ENCODE measurements at regions of chr12 and their contacts with region 1.

Region 1: DNA sequence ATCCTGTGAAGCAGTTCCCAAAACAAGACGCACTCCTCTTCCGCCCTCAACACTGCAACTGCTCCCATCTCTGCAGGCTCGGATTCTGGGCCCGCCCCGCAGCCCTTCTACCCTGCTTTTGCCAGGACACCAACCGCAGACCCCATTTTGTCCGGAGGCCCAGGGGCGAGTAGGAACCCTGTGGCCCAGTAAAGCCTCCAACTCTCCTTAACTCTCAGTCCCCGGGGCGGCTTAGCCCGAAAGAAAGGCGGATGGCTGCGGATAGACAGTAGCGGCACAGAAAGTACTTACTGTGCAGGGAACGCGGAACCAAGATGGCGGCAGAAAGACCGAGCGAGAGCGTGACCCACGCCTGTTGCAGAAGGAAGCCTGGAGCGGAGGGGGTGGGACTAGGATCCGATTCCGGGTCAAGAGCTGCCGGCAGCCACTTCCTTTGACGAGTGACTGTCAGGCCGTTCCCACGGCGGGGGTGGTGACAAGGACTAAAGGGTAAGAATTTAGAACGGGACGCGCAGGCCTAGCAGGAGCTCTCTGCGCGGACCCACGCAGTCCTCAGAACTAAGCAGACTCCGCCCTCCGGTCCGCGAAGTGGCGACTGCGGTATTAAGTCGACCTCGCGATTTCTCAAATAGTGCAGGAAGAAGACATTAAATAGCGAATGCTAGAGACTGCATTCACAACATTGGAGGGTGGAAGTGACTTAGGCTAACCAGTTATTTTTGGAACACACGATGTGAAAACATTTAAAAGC is at the start of gene NACA:
- DNase-seq: peak; percentile 99
- H3K4me3 ChIP-seq: peak within 1 kb of the TSS; percentile 92
- CTCF ChIP-seq: no peak
- POLR2A ChIP-seq: peak in 1 of 2 donors; percentile 82
- total RNA-seq, gene NACA: 1,502 to 2,024 (median 1,825) TPM

Region 2: DNA sequence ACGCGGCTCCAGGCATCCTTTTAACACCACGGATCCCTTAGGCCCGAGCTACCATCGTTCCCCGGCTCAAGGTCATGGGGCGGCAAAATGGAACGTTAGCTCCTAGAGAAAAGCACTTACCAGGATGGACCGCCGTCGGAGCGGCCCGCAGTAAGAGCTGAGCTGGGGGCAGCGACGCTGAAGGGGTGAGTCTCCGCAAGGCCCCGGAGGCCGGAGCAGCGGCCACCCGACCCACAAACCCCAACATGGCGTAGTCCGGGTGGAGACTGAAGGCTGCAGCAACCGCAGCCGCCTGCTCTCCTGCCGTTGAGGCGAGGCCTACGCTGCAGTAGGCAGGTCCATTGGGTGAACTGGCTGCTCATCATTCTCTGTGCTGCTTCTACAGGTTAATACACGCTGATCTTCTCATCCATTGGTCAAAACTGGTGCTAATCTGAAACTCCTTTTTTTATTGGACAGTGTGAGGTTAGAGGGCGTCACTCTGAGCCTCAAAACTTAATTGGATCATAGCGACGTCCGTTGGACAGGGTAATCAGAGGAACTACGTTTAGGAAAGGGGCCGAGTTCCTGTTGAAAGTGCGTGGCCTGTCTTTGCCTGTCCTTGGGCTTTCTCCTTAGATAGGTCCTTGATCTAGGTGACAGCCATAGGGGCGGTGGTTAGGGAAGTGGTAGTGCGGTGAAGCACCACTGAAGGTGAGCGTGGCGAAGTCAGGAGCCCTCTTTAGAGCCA is 79.3 kb before region 1 on chr12 and contains the start of gene ATP5F1B:
- intact Hi-C with region 1: loop called (anchors 10 kb)
- DNase-seq: peak; percentile 98
- H3K4me3 ChIP-seq: peak within 1 kb of the TSS; percentile 92
- CTCF ChIP-seq: no peak
- POLR2A ChIP-seq: peak in 1 of 2 donors; percentile 89
- total RNA-seq, gene ATP5F1B: 360 to 457 (median 395) TPM

Measured in lower leg skin (tissue), 4 donors.